ENCODE measurements at regions of chrX and their contacts with region 1.

Region 1: DNA sequence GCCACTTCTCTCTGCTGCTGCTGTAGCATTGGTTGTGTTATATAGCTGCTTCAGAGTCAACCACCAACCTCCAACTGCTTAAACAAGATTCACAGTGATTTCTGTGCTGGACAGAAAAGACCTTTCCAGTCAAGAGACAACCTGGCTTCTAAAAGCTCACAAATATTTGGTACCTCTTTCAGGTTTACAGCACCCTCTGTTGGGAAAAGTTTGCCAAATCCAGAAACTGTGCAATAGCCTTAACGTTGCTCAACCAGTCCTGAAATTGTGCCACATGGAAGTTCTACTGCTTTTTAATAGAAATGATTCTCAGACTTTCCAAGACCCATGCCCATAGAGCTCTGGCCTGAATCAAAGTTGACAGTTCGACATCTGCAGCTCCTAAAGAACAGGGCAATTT is 842.1 kb upstream of the HTR2C start:
- DNase-seq: peak; percentile 7
- H3K4me3 Mint-ChIP-seq: no peak overlapping the region
- H3K27ac Mint-ChIP-seq: no peak overlapping the region
- H3K4me1 Mint-ChIP-seq: no peaks in the 10 kb centered on the region
- H3K27me3 Mint-ChIP-seq: no peaks in the 10 kb centered on the region
- CTCF ChIP-seq: no peak

Region 2: DNA sequence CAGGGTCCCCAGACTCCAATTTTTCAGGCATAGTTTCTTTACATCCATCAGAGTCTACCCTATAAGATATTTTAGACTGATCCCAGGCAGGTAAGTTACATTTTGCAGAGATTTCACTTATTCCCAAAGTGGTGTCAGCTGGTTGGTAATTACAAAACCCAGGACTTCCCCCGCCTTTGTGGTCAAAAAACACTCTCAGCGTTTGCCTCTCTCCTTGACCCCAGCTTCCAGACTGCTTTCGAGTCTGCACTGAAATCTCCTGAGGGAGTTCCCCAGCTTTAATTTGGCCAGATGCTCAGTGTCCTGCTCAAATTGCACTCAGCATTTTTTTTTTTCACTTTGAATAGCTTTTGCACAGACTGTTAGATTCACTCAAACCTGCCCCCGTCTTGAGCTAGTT is 889.9 kb before region 1 on chrX:
- CTCF ChIA-PET with region 1: no interaction called
- intact Hi-C with region 1: no loop called
- DNase-seq: no peak
- H3K4me3 Mint-ChIP-seq: no peak overlapping the region
- H3K27ac Mint-ChIP-seq: no peak overlapping the region
- H3K4me1 Mint-ChIP-seq: peaks cover 11% of the 10 kb centered on the region
- H3K27me3 Mint-ChIP-seq: no peaks in the 10 kb centered on the region
- CTCF ChIP-seq: no peak

Region 3: DNA sequence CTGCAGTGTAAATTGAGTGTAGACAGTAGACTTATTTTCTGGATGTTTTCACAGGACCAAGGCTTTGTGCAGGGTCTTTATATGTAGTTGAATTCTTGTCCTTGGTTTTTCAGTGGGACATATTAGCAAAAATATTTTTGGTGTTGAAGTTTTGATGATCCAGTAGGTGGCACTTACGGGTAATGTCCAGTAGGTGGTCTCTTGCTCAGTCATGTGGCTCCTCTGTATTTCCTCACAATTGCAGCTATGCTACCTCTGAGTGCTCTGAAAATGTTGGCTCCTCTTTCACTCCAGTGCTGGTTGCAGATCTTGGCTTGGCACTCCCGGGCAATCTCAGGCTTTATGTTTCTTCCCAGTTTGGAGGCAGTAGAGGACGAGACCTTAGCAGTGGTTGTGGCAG is 481.3 kb before region 1 on chrX:
- CTCF ChIA-PET with region 1: interaction called, 6 read pairs
- intact Hi-C with region 1: loop called (anchors 5 kb)
- DNase-seq: no peak
- H3K4me3 Mint-ChIP-seq: no peak overlapping the region
- H3K27ac Mint-ChIP-seq: no peak overlapping the region
- H3K4me1 Mint-ChIP-seq: peaks cover 7% of the 10 kb centered on the region
- H3K27me3 Mint-ChIP-seq: no peaks in the 10 kb centered on the region
- CTCF ChIP-seq: no peak

Measured in Calu3 (cell line).